Activated CD4-positive, alpha-beta memory T cell treated with anti-CD3 and anti-CD28 coated beads for 36 hours (primary cell): ENCODE measurements at regions of chr2 and their contacts with region 1.

Region 1: DNA sequence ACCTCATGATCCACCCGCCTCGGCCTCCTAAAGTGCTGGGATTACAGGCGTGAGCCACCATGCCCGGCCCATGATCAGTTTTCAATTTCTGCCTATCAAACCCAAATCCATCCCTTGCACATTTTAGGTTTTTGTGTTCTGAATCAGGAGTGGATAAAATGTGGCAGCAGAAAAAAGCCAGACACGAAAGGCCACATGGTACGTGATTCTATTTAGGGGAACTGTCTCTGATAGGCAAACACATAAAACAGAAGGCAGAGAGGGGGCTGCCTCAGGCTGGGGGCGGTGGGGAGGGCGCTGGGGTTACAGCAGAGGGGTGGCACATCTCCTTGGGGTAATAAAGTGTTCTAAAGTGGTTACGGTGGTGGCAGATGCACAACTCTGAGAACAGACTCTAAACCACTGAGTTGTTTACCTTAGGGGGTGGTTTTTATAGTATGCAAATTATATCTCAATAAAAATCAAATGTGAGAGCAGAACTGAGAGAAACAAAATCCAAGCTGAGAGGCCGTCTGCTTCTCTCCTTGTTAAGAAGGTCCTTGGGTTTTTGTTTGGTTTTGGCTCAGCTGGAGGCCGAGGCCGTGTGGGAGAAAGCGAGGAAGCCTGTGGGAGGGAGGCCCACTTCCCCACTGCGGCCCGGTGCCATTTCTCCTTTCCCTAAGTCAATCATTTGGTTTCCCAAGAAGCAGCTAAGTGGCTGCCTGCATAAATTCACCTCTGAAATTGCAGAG is 78.0 kb downstream of the SOWAHC start:
- DNase-seq: no peak
- H3K4me3 Mint-ChIP-seq: no peak overlapping the region
- H3K27ac Mint-ChIP-seq: no peak overlapping the region
- H3K4me1 Mint-ChIP-seq: no peaks in the 10 kb centered on the region
- H3K27me3 Mint-ChIP-seq: peaks cover 2% of the 10 kb centered on the region

Region 2: GRCh38 chr2:109637749-109638570 is 54.2 kb before region 1 on chr2:
- CTCF ChIA-PET with region 1: no interaction called
- POLR2A ChIA-PET with region 1: no interaction called
- intact Hi-C with region 1: loop called (anchors 2 kb)
- DNase-seq: no peak
- H3K4me3 Mint-ChIP-seq: no peak overlapping the region
- H3K27ac Mint-ChIP-seq: peak overlapping the region; percentile 13
- H3K4me1 Mint-ChIP-seq: peaks cover 20% of the 10 kb centered on the region
- H3K27me3 Mint-ChIP-seq: no peaks in the 10 kb centered on the region